GM12878 (cell line): ENCODE measurements at regions of chr7 and their contacts with region 1.

Region 1: GRCh38 chr7:114622221-114622620 is 207.6 kb downstream of the FOXP2 start:
- DNase-seq: no peak
- ATAC-seq: no peak
- H3K4me3 ChIP-seq: no peak overlapping the region
- H3K27ac ChIP-seq: no peak overlapping the region
- H3K4me1 ChIP-seq: no peaks in the 10 kb centered on the region
- H3K27me3 ChIP-seq: no peaks in the 10 kb centered on the region; a peak in 1 of 4 replicates
- CTCF ChIP-seq: no peak
- EP300 ChIP-seq: no peak
- POLR2A ChIP-seq: no peak
- RAD21 ChIP-seq: no peak

Region 2: DNA sequence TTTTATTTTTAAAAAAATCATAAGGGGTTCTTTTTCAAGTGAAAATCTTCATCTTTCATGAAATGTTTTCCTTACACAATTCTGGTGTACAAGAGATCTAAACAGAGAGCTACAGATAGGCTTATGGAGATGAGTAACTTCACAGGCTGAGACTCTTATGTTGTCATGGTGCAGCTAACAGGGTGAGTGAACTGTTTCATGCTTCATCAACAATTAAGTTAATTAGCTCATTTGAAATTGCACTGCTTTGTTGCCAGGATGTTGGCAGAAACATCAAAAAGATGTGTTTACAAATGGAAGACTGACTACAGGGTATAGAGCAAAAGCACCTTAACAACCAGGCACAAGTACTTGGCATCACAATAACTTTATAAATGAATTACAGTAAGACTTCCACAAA is 23.2 kb after region 1 on chr7:
- CTCF ChIA-PET with region 1: no interaction called
- POLR2A ChIA-PET with region 1: no interaction called
- RAD21 ChIA-PET with region 1: interaction called, 3 read pairs
- SMC1A ChIA-PET with region 1: interaction called, 10 read pairs
- in situ Hi-C with region 1: no loop called
- intact Hi-C with region 1: no loop called
- DNase-seq: no peak
- ATAC-seq: peak; percentile 75
- H3K4me3 ChIP-seq: no peak overlapping the region
- H3K27ac ChIP-seq: no peak overlapping the region
- H3K4me1 ChIP-seq: no peaks in the 10 kb centered on the region
- H3K27me3 ChIP-seq: no peaks in the 10 kb centered on the region; a peak in 1 of 4 replicates
- CTCF ChIP-seq: no peak
- EP300 ChIP-seq: no peak
- POLR2A ChIP-seq: no peak
- RAD21 ChIP-seq: no peak